HCT116 (cell line): ENCODE measurements at regions of chr10 and their contacts with region 1.

Region 1: DNA sequence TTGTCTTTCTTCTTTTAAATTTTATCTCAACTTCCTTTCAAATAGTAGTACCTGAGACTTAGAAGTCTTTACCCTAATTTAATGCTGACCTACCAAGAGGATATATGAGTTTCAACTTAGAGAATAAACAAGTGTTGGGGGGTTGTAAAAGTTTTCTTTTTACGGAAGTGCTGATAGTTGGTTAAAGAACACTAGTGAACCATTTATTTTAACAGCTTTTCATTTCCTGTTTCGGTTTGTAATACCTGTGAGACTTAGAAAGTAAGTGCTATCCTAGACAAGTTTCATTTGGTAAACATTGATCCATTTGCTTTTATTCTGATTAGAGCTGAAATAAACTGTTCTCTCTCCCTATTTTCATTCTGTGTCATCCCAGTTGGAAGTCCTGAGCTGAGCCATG is 683.1 kb upstream of the SORCS1 start:
- DNase-seq: no peak
- ATAC-seq: no peak
- H3K4me3 ChIP-seq: no peak overlapping the region
- H3K27ac ChIP-seq: no peak overlapping the region
- H3K4me1 ChIP-seq: no peaks in the 10 kb centered on the region
- H3K27me3 ChIP-seq: no peaks in the 10 kb centered on the region
- CTCF ChIP-seq: no peak
- POLR2A ChIP-seq: no peak
- RAD21 ChIP-seq: no peak

Region 2: GRCh38 chr10:107616463-107617410 is 230.9 kb before region 1 on chr10:
- CTCF ChIA-PET with region 1: no interaction called
- POLR2A ChIA-PET with region 1: no interaction called
- RAD21 ChIA-PET with region 1: no interaction called
- intact Hi-C with region 1: no loop called
- DNase-seq: no peak
- ATAC-seq: no peak
- H3K4me3 ChIP-seq: no peak overlapping the region
- H3K27ac ChIP-seq: no peak overlapping the region
- H3K4me1 ChIP-seq: no peaks in the 10 kb centered on the region
- H3K27me3 ChIP-seq: no peaks in the 10 kb centered on the region
- CTCF ChIP-seq: no peak
- POLR2A ChIP-seq: no peak
- RAD21 ChIP-seq: no peak

Region 3: DNA sequence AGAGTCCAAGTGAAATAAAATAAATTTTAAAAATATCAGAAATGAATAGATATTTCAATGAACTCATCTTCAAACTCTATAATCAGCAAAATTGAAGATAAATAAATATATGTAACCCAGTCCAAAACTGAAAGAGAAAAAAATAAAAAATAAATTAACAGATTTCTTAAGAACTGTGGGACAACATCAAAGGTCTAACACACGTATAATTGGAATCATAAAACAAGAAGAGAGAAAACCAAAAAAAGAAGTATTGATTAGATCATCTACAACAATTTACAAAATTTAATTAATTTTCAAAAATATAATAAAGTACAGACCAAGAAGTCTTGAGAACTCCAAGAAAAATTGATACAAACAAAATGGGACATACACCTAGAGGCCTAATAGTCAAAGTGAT is 57.3 kb before region 1 on chr10:
- CTCF ChIA-PET with region 1: no interaction called
- POLR2A ChIA-PET with region 1: no interaction called
- RAD21 ChIA-PET with region 1: no interaction called
- intact Hi-C with region 1: loop called (anchors 5 kb)
- DNase-seq: no peak
- ATAC-seq: no peak
- H3K4me3 ChIP-seq: no peak overlapping the region
- H3K27ac ChIP-seq: no peak overlapping the region
- H3K4me1 ChIP-seq: no peaks in the 10 kb centered on the region
- H3K27me3 ChIP-seq: no peaks in the 10 kb centered on the region
- CTCF ChIP-seq: no peak
- POLR2A ChIP-seq: no peak
- RAD21 ChIP-seq: no peak